Activated CD4-positive, alpha-beta T cell treated with anti-CD3 and anti-CD28 coated beads for 36 hours (primary cell): ENCODE measurements at regions of chr4 and their contacts with region 1.

Region 1: DNA sequence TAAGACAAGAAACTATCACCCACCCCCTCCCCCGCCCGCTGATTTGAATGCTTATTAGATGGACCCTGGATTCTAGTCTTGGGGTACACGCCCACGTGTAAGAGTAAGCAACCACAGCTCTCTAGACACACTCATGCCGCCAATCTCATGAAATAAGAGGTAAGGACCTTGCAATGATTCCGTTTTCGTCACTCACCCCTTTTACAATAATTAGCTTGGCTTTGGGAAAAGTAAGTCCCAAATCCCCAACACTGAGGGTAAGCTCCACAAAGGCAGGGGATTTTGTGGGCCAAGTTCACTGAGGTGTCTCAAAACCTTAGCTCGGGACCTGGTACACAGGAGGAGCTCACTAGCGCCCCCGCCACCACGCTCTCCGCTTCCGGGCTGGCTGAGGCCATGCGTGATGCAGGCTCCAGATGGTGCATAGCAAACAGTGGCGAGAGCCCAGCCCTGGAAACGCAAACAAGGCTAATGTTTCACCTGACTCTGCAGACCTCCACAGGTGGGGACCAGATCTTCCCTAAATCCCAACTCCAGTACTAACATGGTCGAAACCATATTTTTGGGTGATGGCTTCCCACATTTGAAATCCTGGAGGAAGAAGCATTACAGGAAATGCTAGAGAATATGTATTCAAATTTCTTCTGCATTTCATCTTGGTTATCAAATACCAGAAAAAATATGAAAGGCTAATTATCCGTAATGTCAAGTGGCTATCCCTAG is 4.1 kb downstream of the PLAC8 start:
- DNase-seq: peak; percentile 96
- ATAC-seq: peak; percentile 81
- H3K4me3 Mint-ChIP-seq: peak overlapping the region; percentile 91
- H3K27ac Mint-ChIP-seq: peak overlapping the region; percentile 96
- H3K4me1 Mint-ChIP-seq: peaks cover 49% of the 10 kb centered on the region
- H3K27me3 Mint-ChIP-seq: no peaks in the 10 kb centered on the region

Region 2: DNA sequence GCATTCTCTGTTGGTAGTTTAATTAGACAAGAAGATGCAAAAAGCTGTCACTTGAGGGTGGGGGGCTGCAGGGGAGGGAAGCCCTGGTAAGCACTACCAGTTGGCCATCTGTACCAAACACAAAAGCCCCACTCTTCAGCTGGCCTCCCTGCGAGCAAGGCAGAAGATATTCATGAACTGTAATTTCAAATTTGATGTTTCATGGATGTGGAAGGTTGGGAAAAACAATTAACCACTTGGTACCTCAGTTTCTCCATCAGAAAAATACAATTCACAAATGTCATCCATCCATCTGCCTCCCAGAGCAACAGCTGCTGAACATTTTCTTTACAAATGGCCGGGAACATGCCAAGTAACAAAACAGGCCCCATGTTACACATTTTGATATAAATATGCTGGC is 1001.9 kb before region 1 on chr4:
- CTCF ChIA-PET with region 1: no interaction called
- POLR2A ChIA-PET with region 1: no interaction called
- intact Hi-C with region 1: no loop called
- DNase-seq: no peak
- ATAC-seq: no peak
- H3K4me3 Mint-ChIP-seq: no peak overlapping the region
- H3K27ac Mint-ChIP-seq: no peak overlapping the region
- H3K4me1 Mint-ChIP-seq: no peaks in the 10 kb centered on the region
- H3K27me3 Mint-ChIP-seq: peaks cover 2% of the 10 kb centered on the region

Region 3: DNA sequence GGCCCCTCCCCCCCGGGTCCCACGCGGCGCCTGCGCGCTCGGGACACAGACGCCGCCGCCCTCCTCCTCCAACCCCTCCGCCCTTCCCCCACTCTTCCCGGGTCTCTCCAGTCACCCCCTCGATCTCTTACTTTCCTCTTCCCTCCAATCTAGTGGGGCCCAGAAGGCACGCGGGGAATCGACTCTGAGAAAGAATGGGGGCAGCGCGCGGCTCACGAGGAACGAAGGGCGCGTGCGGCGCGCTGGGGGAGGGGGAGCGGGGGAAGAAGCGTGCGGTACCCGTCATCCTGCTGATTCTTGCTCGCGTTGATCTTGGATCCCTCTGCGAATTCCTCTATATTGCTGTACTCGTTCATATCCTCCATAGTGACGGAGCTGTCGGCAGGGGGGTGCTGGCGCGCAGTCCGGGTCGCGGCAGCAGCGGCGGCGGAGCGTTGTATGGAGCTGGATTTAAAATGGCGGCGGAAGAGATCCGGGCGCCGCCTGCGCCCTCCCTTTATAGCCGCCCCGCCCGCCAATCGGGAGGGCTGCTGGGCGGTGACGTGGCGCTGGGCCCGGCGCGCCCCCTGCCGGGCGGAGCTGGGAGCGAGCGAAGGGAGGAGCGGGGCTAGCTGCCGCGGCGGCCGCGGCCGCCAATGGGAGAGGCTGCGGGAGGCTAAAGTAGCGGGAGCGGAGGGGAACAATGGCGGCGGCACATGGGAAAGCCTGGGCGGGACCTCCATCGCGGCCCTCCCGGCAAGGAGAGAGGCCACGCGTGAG is 681.2 kb before region 1 on chr4:
- CTCF ChIA-PET with region 1: no interaction called
- POLR2A ChIA-PET with region 1: no interaction called
- intact Hi-C with region 1: loop called in 1 of 2 experiments (anchors 5 kb)
- DNase-seq: peak; percentile 96
- ATAC-seq: peak; percentile 55
- H3K4me3 Mint-ChIP-seq: peak overlapping the region; percentile 94
- H3K27ac Mint-ChIP-seq: peak overlapping the region; percentile 99
- H3K4me1 Mint-ChIP-seq: peaks cover 50% of the 10 kb centered on the region
- H3K27me3 Mint-ChIP-seq: no peaks in the 10 kb centered on the region

Region 4: GRCh38 chr4:82939416-82939815 is 171.0 kb before region 1 on chr4:
- CTCF ChIA-PET with region 1: no interaction called
- POLR2A ChIA-PET with region 1: no interaction called
- intact Hi-C with region 1: no loop called
- DNase-seq: no peak
- ATAC-seq: no peak
- H3K4me3 Mint-ChIP-seq: no peak overlapping the region
- H3K27ac Mint-ChIP-seq: no peak overlapping the region
- H3K4me1 Mint-ChIP-seq: no peaks in the 10 kb centered on the region
- H3K27me3 Mint-ChIP-seq: no peaks in the 10 kb centered on the region

Region 5: DNA sequence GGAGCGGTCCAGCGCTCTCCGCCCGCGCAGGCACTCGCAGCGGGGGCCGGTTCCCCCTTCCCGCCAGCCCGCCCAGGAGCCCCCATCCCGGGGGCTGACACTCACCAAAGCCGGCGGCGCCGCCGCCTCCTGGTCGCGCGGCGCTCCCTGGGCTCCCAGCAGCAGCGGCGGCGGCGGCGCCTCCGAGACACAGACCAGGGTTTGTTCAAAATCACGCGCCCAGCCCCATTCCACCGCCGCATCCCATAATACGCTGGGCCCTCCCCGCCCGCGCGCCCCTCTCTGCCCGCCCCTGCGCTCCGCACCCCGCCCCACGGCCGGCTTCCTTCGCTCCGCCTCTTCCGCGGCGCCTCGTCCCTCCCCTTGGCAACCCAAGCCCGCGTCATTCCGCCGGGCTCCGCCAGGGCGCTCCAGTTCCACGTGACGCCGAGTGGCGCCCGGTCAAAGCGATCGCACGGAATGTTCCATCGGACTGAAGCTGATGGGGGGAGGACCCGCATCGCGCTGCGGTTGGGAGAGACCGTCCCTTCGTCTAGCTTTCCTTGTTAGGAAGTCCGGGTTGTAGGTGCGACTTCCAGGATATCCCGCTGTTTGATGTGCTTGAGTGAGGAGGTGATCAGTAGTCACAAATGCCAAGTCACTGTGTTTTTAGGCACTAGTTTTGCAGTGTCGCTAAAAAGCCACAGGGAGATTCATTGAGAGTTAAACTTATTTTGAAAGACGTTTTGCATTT is 97.5 kb before region 1 on chr4:
- CTCF ChIA-PET with region 1: interaction called, 5 read pairs
- POLR2A ChIA-PET with region 1: no interaction called
- intact Hi-C with region 1: loop called (anchors 1 to 2 kb)
- DNase-seq: peak; percentile 99
- ATAC-seq: peak; percentile 88
- H3K4me3 Mint-ChIP-seq: peak overlapping the region; percentile 99
- H3K27ac Mint-ChIP-seq: peak overlapping the region; percentile 93
- H3K4me1 Mint-ChIP-seq: peaks cover 31% of the 10 kb centered on the region
- H3K27me3 Mint-ChIP-seq: no peaks in the 10 kb centered on the region

Region 6: DNA sequence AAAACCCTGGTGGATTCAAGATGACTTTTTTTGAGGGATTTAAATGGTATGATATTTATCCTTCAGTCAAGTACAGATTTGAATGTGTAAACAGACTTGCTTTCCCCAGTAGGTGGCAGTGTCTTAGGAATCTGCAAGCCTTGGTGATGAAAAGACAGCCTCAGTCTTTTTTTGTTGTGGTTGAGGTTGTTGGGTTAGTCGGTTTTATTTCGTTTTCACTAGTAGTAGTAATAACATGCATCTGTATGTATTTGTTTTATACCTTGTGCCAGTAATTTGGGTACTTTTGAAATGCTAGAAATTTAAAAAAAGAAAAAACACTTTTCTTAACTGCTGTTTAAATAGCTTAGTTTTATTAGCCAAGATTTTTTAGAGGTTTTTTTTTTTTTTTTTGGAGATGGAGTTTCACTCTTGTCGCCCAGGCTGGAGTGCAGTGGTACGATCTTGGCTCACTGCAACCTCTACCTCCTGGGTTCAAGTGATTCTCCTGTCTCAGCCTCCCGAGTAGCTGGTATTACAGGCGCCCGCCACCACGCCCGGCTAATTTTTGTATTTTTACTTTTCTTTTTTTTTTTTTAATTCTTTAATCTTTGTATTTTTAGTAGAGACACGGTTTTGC is 36.2 kb before region 1 on chr4:
- CTCF ChIA-PET with region 1: interaction called, 23 read pairs
- POLR2A ChIA-PET with region 1: interaction called, 3 read pairs
- intact Hi-C with region 1: loop called (anchors 1 kb)
- DNase-seq: peak; percentile 63
- ATAC-seq: peak; percentile 91
- H3K4me3 Mint-ChIP-seq: peak overlapping the region; percentile 25
- H3K27ac Mint-ChIP-seq: no peak overlapping the region
- H3K4me1 Mint-ChIP-seq: peaks cover 13% of the 10 kb centered on the region
- H3K27me3 Mint-ChIP-seq: no peaks in the 10 kb centered on the region

Region 7: DNA sequence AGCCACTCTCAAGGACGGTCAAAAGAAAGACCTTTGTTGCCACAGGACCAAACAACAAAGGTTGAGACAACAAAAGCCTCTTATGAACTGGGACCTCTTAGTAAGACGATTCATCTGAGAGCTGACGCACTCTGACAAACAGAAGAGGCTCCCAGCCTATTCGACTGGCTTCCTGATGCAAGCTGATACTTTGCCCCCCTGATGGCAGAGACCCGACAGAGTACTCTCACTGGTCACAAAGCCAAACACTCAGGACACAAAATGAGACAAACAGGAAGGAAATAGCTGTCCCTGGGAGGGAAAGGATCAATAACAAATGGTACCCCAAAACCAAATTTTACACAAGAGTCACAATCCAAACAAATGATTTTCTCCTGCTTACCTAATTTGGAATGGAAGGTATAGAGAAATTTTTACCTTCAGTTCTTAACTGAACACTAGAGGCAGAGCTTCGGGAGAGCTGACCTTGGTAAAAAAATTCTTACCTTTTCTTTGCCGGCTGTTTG is 79.3 kb after region 1 on chr4:
- CTCF ChIA-PET with region 1: no interaction called
- POLR2A ChIA-PET with region 1: no interaction called
- intact Hi-C with region 1: no loop called
- DNase-seq: no peak
- ATAC-seq: no peak
- H3K4me3 Mint-ChIP-seq: no peak overlapping the region
- H3K27ac Mint-ChIP-seq: no peak overlapping the region
- H3K4me1 Mint-ChIP-seq: no peaks in the 10 kb centered on the region
- H3K27me3 Mint-ChIP-seq: no peaks in the 10 kb centered on the region

Region 8: GRCh38 chr4:83237591-83237990 is 127.2 kb after region 1 on chr4:
- CTCF ChIA-PET with region 1: interaction called, 3 read pairs
- POLR2A ChIA-PET with region 1: no interaction called
- intact Hi-C with region 1: loop called (anchors 1 to 2 kb)
- DNase-seq: no peak
- ATAC-seq: no peak
- H3K4me3 Mint-ChIP-seq: no peak overlapping the region
- H3K27ac Mint-ChIP-seq: no peak overlapping the region
- H3K4me1 Mint-ChIP-seq: peaks cover 42% of the 10 kb centered on the region
- H3K27me3 Mint-ChIP-seq: peaks cover 25% of the 10 kb centered on the region

Region 9: GRCh38 chr4:83356899-83357661 is 246.7 kb after region 1 on chr4:
- CTCF ChIA-PET with region 1: interaction called, 3 read pairs
- POLR2A ChIA-PET with region 1: interaction called, 5 read pairs
- intact Hi-C with region 1: loop called (anchors 5 kb)
- DNase-seq: peak; percentile 52
- ATAC-seq: peak; percentile 91
- H3K4me3 Mint-ChIP-seq: no peak overlapping the region
- H3K27ac Mint-ChIP-seq: peak overlapping the region; percentile 72
- H3K4me1 Mint-ChIP-seq: peaks cover 23% of the 10 kb centered on the region
- H3K27me3 Mint-ChIP-seq: no peaks in the 10 kb centered on the region